MCF 10A (cell line): ENCODE measurements at regions of chr1 and their contacts with region 1.

Region 1: DNA sequence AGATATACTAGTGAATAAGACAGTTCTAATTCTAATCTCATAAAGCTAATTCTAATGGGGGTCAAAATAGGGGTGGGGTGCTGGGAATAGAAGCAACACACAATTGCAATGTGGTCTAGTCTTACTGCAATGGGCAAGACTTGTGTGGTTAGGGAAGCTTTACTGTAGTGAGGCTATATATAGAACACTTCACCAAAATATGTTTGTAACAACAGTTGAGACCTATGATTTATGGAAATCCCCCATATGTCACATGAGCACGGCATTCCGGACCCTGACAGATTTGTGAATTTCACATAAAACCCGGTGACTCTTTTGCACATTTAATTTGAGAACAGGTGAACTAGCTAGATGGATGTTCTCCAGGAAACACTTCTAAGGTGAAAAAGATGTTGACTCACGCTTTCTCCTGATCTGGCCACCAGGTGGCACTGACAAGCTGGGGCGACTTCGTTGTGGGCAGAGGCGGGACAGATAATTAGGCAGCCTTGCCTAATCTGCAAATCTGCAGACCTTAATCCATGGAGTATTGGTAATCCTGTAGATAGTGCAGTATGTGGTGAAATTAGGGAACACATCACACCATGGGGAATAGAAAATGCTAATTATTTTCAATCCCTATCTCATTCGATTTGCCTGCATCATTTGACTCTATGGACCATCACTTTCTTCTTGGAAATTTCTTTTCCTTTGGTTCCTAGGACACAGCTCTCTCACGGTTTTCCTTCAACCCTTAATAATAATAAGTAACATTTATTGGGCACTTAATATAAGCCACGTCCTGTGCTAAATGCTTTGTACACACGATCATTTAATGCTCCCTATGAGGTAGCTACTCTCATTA is 37.7 kb downstream of the KIAA0040 start:
- DNase-seq: peak; percentile 82
- H3K4me3 Mint-ChIP-seq: no peak overlapping the region
- H3K27ac Mint-ChIP-seq: no peak overlapping the region
- H3K4me1 Mint-ChIP-seq: peaks cover 17% of the 10 kb centered on the region
- H3K27me3 Mint-ChIP-seq: peaks cover 41% of the 10 kb centered on the region
- CTCF ChIP-seq: peak; percentile 95

Region 2: GRCh38 chr1:173276922-173277800 is 1877.7 kb before region 1 on chr1:
- CTCF ChIA-PET with region 1: no interaction called
- POLR2A ChIA-PET with region 1: no interaction called
- intact Hi-C with region 1: no loop called
- DNase-seq: no peak
- H3K4me3 Mint-ChIP-seq: no peak overlapping the region
- H3K27ac Mint-ChIP-seq: no peak overlapping the region
- H3K4me1 Mint-ChIP-seq: no peaks in the 10 kb centered on the region
- H3K27me3 Mint-ChIP-seq: no peaks in the 10 kb centered on the region
- CTCF ChIP-seq: no peak

Region 3: GRCh38 chr1:175137369-175137768 is 17.5 kb before region 1 on chr1:
- CTCF ChIA-PET with region 1: interaction called, 415 read pairs
- POLR2A ChIA-PET with region 1: no interaction called
- intact Hi-C with region 1: no loop called
- DNase-seq: peak; percentile 33
- H3K4me3 Mint-ChIP-seq: no peak overlapping the region
- H3K27ac Mint-ChIP-seq: no peak overlapping the region
- H3K4me1 Mint-ChIP-seq: peaks cover 3% of the 10 kb centered on the region
- H3K27me3 Mint-ChIP-seq: peaks cover 28% of the 10 kb centered on the region
- CTCF ChIP-seq: no peak

Region 4: DNA sequence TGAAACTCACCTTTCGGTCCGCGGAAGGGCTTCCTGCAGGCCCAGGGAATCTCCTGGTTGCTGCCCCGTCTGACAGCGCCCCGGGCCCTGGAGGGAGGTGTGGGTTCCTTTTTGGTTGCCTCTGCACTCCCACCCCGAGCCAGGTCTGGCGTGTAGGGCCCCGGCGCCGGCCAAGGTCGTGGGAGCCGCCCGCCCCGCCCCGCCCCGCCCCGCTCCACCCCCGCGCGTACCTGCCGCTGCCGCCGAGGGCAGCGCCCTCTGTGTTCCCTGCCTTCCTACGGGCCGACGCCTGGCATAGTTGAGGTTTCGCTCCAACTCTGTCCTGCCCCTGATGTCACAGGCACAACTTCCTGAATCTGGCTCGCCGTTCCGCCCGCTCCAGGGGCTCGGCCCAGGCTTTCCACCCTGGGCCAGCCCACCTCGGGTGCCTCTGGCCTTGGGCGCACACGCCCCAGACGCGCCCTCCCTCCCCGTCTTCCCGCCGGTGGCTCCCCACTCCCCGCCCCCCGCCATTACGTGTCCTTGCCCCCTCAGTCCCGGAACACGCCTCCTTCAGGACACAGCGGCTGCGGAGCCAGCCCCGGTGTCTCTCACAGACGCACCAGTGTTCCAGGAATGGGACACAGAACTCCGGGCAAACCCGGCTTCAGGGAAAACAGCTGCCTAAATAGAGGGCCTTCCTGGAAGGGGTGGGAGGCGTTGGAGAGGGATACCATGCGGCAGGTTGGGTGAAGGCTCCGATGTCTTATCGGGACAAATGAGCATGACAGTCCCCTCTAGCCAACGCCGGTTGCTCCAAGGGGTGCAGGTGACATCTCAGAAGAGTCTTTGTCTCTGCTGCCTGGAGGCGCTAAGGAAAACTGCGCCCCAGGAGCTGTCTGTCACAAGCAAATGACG is 38.0 kb after region 1 on chr1 and contains the start of gene KIAA0040:
- CTCF ChIA-PET with region 1: interaction called, 78 read pairs
- POLR2A ChIA-PET with region 1: interaction called, 4 read pairs
- intact Hi-C with region 1: loop called (anchors 1 kb)
- DNase-seq: peak; percentile 87
- H3K4me3 Mint-ChIP-seq: peak within 1 kb of the TSS; percentile 80
- H3K27ac Mint-ChIP-seq: peak within 1 kb of the TSS; percentile 67
- H3K4me1 Mint-ChIP-seq: peaks cover 43% of the 10 kb centered on the region
- H3K27me3 Mint-ChIP-seq: no peaks in the 10 kb centered on the region
- CTCF ChIP-seq: no peak
- total RNA-seq, gene KIAA0040: 26.7 and 27.7 TPM in 2 replicates

Region 5: GRCh38 chr1:175237389-175237788 is 82.5 kb after region 1 on chr1:
- CTCF ChIA-PET with region 1: interaction called, 22 read pairs
- POLR2A ChIA-PET with region 1: interaction called, 3 read pairs
- intact Hi-C with region 1: no loop called
- DNase-seq: no peak
- H3K4me3 Mint-ChIP-seq: no peak overlapping the region
- H3K27ac Mint-ChIP-seq: no peak overlapping the region
- H3K4me1 Mint-ChIP-seq: no peaks in the 10 kb centered on the region
- H3K27me3 Mint-ChIP-seq: no peaks in the 10 kb centered on the region
- CTCF ChIP-seq: no peak

Region 6: DNA sequence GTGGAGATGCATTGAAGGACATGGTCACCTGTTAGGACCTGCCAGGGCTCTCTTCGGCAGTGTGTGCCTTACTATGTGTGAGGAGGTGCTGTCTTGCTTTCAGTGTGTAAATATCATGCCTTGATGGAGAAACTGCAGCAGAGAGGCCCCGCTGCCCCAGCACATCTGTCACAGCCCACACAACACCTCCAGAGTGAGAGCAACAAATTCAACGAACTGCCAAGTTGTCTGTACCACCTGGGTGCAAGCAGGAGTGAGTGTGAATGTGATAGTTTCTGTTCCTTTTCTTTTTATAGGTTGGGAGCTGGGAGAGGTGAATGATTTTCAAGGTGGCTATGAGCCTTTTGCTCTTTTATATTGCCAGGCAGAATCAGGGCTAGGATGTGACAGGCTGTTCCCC is 152.3 kb after region 1 on chr1:
- CTCF ChIA-PET with region 1: interaction called, 723 read pairs
- POLR2A ChIA-PET with region 1: no interaction called
- intact Hi-C with region 1: no loop called
- DNase-seq: no peak
- H3K4me3 Mint-ChIP-seq: no peak overlapping the region
- H3K27ac Mint-ChIP-seq: no peak overlapping the region
- H3K4me1 Mint-ChIP-seq: peaks cover 5% of the 10 kb centered on the region
- H3K27me3 Mint-ChIP-seq: peaks cover 33% of the 10 kb centered on the region
- CTCF ChIP-seq: no peak

Region 7: GRCh38 chr1:175373786-175374623 is 219.2 kb after region 1 on chr1:
- CTCF ChIA-PET with region 1: interaction called, 13 read pairs
- POLR2A ChIA-PET with region 1: no interaction called
- intact Hi-C with region 1: no loop called
- DNase-seq: peak; percentile 47
- H3K4me3 Mint-ChIP-seq: no peak overlapping the region
- H3K27ac Mint-ChIP-seq: no peak overlapping the region
- H3K4me1 Mint-ChIP-seq: no peaks in the 10 kb centered on the region
- H3K27me3 Mint-ChIP-seq: peaks cover 48% of the 10 kb centered on the region
- CTCF ChIP-seq: peak; percentile 92

Region 8: GRCh38 chr1:176880954-176881595 is 1726.2 kb after region 1 on chr1:
- CTCF ChIA-PET with region 1: no interaction called
- POLR2A ChIA-PET with region 1: no interaction called
- intact Hi-C with region 1: loop called (anchors 10 kb)
- DNase-seq: peak; percentile 90
- H3K4me3 Mint-ChIP-seq: no peak overlapping the region
- H3K27ac Mint-ChIP-seq: no peak overlapping the region
- H3K4me1 Mint-ChIP-seq: no peaks in the 10 kb centered on the region
- H3K27me3 Mint-ChIP-seq: peaks cover 12% of the 10 kb centered on the region
- CTCF ChIP-seq: peak; percentile 95